Testis (tissue), 5 donors: ENCODE measurements at regions of chr17 and their contacts with region 1.

Region 1: DNA sequence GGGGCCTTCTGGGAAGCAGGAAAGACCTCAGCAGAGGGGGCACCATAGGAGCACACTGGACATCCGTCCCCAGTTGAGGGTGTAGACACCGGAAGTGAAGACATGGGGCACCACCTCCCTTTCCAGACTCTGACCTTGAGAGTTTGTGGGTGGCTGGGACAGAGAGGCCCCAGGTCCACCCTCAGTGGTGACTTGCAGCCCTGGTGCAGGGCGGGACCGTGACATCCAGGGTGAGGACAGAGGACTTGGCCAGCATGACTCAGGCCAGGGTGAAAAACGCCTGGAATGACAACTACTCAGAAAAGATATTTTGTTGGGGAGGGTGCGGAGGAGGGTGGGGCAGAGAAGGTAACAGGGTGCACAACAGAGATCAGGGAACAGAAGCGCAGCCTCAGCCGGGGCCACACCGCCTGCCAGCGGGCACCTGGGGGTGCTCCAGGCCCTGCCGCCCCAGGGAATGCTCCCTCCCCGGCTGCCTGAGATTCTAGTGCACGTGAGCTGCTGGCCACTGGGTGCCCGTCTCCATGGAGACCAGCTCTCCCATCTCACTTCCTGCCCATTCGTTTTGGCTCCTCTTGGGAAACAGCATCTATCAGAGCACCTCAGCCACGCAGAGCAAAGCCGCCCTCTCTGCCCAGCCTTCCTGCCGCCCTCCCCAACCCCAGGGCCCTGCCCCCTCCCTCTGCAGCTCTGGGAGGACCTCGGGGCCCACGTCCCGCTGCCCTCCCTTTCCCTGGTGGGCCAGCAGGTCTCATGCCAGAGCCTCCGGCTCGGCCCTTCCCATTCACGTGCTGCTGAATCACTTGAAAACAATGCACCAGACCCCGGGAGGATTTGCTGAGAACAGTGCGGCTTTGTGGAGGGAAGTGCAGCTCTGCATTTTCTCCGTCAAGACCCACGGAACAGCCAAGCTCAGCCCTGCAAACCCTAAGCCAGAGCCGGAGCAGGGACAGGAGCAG is 19.6 kb downstream of the CEP295NL start:
- DNase-seq: peak; percentile 93
- H3K4me3 ChIP-seq: no peak overlapping the region
- H3K27ac ChIP-seq: peak overlapping the region; percentile 92 to 93
- H3K4me1 ChIP-seq: peaks cover 66% of the 10 kb centered on the region
- H3K27me3 ChIP-seq: no peaks in the 10 kb centered on the region
- CTCF ChIP-seq: no peak
- POLR2A ChIP-seq: no peak

Region 2: DNA sequence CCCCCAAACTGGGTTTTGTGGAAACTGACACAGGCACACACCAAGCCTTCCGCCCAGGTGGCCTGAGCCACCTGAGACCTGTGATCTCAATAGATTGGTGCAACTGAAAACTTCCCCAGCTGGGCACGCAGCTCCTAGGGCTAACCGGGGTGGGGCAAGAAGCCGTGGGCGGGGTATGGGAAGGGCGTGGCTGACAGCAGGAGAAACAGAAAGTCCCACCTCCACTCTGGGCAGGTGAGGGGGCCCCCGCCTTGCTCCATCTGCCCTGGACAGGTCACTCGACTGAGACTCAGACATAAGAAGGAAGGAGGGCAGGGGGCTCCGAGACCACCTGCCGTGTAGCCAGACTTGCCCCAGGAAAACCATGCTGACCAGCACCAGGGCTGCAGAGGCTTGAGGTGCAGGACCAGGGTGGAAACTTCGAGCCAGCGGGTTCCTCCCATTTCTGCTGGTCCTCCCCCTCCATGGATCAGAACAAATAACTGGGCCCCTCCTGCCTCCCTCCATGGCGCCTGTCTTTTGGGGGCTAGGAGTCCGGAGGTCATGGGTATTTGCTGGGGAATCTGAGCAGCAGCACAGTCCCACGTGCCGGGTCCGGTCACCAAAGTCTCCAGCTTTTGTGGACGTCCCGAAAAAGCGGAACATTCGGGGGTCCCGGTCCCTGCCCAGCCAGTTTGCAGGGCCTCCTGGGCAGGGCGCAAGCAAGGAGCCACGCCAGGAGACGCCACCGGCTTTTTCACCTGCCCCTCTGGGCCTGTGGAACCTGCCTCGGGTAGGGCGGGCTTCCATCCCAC is 40.4 kb after region 1 on chr17:
- intact Hi-C with region 1: loop called (anchors 5 kb)
- DNase-seq: peak; percentile 86
- H3K4me3 ChIP-seq: peak overlapping the region; percentile 70 to 89
- H3K27ac ChIP-seq: peak overlapping the region; percentile 89 to 98
- H3K4me1 ChIP-seq: peaks cover 55% of the 10 kb centered on the region
- H3K27me3 ChIP-seq: no peaks in the 10 kb centered on the region
- CTCF ChIP-seq: no peak
- POLR2A ChIP-seq: no peak

Region 3: DNA sequence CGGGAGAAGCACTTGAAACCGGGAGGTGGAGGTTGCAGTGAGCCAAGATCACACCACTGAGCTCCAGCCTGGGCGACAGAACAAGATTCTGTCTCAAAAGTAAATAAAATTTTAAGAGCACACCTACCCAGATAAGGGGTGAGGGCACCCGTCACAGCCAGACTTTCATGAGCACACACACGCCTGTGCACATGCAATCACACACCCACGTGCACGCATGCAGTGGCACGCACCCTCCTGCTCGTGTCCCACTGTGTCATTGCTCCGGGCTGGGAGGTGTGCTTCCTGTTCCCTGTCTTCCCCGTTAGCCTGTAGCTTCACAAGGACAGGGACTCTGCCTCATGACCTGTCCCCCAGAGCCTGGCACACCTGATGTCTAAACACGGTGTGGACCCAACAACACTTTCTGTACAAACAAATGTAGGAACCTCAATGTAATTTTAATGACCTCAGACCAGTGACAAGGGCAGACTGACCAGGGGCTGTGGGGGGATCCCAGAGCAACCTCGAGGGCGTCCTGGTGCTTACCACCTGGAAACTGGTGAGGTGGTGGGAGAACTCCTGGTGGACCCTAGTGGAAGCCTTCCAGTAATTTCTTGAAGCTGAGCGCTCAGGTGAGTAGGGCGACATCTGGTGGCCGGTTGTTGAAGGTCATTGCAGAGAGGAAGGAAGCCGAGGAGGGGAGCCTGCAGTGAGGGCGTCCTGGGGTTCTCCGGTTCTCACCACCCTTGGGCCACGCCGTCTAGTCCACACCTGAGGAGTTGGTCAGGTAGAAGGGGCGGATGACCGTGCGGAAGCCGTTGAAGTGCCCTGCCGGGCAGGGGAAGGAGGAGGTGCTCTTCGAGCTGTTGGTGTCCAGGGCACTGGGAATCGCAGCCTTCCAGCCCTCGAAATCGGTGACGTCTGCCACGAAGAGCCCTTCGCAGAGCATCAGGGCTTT is 87.7 kb after region 1 on chr17:
- intact Hi-C with region 1: loop called (anchors 5 kb)
- DNase-seq: peak; percentile 90
- H3K4me3 ChIP-seq: no peak overlapping the region
- H3K27ac ChIP-seq: peak overlapping the region; percentile 59 to 77
- H3K4me1 ChIP-seq: peaks cover 25% of the 10 kb centered on the region
- H3K27me3 ChIP-seq: no peaks in the 10 kb centered on the region
- CTCF ChIP-seq: peak; percentile 89 to 95 (median 90)
- POLR2A ChIP-seq: no peak